Activated T-helper 2 cell treated with anti-CD3 and anti-CD28 coated beads, Interferon-gamma antibody, Interleukin-2, Interleukin-4, amounts not matched to agents 10 μg/mL and 5 μg/mL and 100 μg/mL, durations not matched to agents 14 hours and 24 hours and 36 hours (primary cell): ENCODE measurements at regions of chr6 and their contacts with region 1.

Region 1: GRCh38 chr6:127971945-127972391 is 71.1 kb upstream of the THEMIS start:
- DNase-seq: peak; percentile 69
- H3K4me3 Mint-ChIP-seq: peak overlapping the region; percentile 76
- H3K27ac Mint-ChIP-seq: peak overlapping the region; percentile 96
- H3K4me1 Mint-ChIP-seq: peaks cover 52% of the 10 kb centered on the region
- H3K27me3 Mint-ChIP-seq: no peaks in the 10 kb centered on the region

Region 2: GRCh38 chr6:127855542-127856159 is 116.3 kb before region 1 on chr6:
- intact Hi-C with region 1: loop called (anchors 2 kb)
- DNase-seq: no peak
- H3K4me3 Mint-ChIP-seq: no peak overlapping the region
- H3K27ac Mint-ChIP-seq: peak overlapping the region; percentile 40
- H3K4me1 Mint-ChIP-seq: peaks cover 33% of the 10 kb centered on the region
- H3K27me3 Mint-ChIP-seq: no peaks in the 10 kb centered on the region

Region 3: DNA sequence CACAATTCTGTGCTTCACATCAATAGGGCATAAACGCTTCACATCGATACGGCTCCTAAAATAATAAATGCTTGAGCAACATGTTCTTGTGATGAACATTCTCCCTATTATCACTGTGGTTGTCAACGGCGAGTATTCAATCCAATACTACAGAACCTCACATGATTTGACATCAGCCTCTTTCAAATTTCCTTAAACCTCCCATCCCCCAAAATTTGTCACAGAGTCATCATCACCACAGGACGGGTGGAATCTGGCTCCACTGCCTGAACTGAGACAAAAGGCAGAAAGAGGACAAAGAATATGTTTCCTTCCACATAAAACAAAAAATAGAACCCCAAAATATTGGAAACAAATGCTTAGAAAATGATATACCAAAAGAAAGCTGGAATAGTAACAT is 78.4 kb before region 1 on chr6:
- intact Hi-C with region 1: loop called (anchors 1 kb)
- DNase-seq: no peak
- H3K4me3 Mint-ChIP-seq: peak overlapping the region; percentile 60
- H3K27ac Mint-ChIP-seq: peak overlapping the region; percentile 69
- H3K4me1 Mint-ChIP-seq: peaks cover 45% of the 10 kb centered on the region
- H3K27me3 Mint-ChIP-seq: no peaks in the 10 kb centered on the region

Region 4: GRCh38 chr6:127938701-127939100 is 33.3 kb before region 1 on chr6:
- intact Hi-C with region 1: loop called (anchors 1 kb)
- DNase-seq: no peak
- H3K4me3 Mint-ChIP-seq: no peak overlapping the region
- H3K27ac Mint-ChIP-seq: peak overlapping the region; percentile 31
- H3K4me1 Mint-ChIP-seq: peaks cover 38% of the 10 kb centered on the region
- H3K27me3 Mint-ChIP-seq: no peaks in the 10 kb centered on the region

Region 5: DNA sequence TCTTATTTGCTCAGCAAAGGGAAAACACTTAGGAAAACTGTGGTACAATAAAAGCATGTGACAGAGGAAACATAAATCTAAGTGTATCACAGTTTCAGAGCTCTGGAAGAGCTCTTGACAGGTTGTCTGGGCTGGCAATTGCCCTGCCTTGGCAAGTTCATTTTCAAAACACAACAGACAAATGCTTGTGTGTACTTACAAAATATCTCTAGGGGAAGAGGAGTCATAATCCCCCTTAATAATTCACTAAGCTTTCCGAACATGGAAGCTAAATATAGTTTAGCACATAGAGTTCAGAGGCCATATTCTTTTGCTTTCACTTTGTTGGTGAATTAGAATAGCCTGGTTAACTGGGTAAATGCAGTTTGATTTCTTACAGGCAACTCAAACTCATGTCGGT is 140.5 kb after region 1 on chr6:
- intact Hi-C with region 1: no loop called
- DNase-seq: no peak
- H3K4me3 Mint-ChIP-seq: peak overlapping the region; percentile 58
- H3K27ac Mint-ChIP-seq: no peak overlapping the region
- H3K4me1 Mint-ChIP-seq: peaks cover 11% of the 10 kb centered on the region
- H3K27me3 Mint-ChIP-seq: no peaks in the 10 kb centered on the region

Region 6: DNA sequence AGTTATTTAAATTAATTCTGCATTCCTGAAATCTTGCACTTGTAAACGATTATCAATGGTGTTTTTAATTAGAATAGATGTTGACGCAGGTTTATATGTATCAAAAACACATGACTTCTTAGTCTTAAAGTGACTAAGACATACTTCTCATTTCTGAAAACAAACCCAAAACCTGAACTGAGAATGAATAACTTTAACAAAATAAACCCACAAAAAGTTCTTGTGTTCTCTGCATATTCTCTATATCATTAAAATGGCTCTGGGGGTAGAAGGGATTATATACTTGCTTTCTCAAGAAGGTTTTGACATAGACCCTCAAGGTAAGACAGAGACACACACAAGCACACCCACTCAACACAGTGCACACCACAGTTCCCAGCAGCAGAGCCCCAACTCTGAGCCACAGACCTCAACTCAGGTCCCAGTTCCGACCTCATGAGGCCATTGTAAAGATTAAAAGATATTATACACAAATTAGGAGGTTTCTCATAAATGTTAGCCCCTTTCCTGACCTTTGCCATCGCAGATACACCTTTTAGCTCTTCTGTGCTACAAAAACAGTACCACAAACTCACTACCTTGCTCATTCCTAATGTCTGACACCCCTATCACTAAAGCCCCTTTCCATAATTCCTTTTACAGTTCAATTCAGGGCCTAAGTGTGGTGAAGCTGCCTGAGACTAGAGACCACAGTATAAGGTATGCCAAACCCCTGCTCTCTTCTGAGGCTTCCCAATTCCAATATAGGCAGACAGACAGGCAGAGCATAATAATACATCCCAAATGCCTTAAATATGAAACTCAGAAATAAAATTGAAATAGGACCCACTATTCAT is 280.6 kb after region 1 on chr6:
- intact Hi-C with region 1: loop called (anchors 2 kb)
- DNase-seq: no peak
- H3K4me3 Mint-ChIP-seq: no peak overlapping the region
- H3K27ac Mint-ChIP-seq: peak overlapping the region; percentile 7
- H3K4me1 Mint-ChIP-seq: peaks cover 21% of the 10 kb centered on the region
- H3K27me3 Mint-ChIP-seq: peaks cover 18% of the 10 kb centered on the region

Region 7: GRCh38 chr6:128327890-128328289 is 355.9 kb after region 1 on chr6:
- intact Hi-C with region 1: loop called (anchors 10 kb)
- DNase-seq: peak; percentile 9
- H3K4me3 Mint-ChIP-seq: no peak overlapping the region
- H3K27ac Mint-ChIP-seq: no peak overlapping the region
- H3K4me1 Mint-ChIP-seq: no peaks in the 10 kb centered on the region
- H3K27me3 Mint-ChIP-seq: peaks cover 2% of the 10 kb centered on the region

Region 8: DNA sequence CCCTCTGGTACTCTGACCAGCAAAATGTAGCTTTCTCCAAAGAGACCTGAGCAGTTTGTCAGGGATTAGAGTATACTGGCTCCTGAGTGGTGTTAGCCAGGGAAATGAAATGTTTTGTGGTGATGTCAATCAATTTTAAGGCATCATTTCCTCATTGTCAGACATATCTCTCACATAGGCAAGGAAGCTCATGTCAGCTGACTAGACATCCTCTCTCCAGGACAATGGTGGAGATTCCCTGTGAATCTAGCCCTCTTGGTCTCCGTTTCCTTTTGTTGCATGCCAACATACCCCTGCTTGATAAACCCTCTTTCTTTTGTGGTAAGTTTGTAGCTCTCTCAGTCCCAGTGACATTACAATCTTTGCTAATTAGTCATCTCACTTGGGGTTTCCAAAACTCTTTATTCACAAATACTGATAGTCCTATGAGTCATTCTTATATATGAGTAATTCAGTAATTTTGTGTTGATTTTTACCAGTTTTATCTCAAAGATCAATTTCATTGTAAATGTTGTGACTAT is 684.1 kb after region 1 on chr6:
- intact Hi-C with region 1: loop called (anchors 1 kb)
- DNase-seq: peak; percentile 13
- H3K4me3 Mint-ChIP-seq: no peak overlapping the region
- H3K27ac Mint-ChIP-seq: peak overlapping the region; percentile 79
- H3K4me1 Mint-ChIP-seq: peaks cover 43% of the 10 kb centered on the region
- H3K27me3 Mint-ChIP-seq: no peaks in the 10 kb centered on the region